ENCODE measurements at regions of chr10 and their contacts with region 1.

Region 1: DNA sequence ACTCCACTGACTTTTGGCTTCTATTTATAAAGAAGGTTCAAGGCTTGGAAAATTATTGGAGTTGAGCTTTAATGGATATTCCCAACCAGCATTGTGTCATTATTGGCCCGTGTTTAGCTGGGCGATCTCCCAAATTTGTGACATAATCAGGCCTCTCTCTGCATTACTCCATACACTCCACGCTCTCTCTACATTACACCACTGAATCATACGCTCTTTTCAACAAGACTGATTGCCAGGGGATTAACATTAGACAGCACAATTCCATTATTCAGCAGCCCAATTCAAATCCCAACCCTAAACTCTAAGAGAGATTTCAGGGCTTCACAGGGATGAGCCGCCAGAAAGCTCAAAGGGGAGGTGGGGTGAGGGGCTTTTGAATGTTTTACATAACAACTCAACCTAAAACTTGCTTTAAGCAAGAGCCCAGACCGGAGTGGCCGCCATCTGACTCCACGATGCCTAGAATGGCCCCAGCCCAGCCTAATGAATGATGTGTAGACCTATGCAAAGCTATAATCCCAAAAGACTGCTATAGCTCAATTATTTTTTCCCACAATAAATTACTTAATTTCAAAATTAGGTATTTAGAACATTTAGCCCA is 61.8 kb downstream of the FGFR2 start:
- DNase-seq: peak; percentile 43
- H3K4me3 Mint-ChIP-seq: no peak overlapping the region
- H3K27ac Mint-ChIP-seq: no peak overlapping the region
- H3K4me1 Mint-ChIP-seq: peaks cover 6% of the 10 kb centered on the region
- H3K27me3 Mint-ChIP-seq: no peaks in the 10 kb centered on the region
- CTCF ChIP-seq: no peak

Region 2: DNA sequence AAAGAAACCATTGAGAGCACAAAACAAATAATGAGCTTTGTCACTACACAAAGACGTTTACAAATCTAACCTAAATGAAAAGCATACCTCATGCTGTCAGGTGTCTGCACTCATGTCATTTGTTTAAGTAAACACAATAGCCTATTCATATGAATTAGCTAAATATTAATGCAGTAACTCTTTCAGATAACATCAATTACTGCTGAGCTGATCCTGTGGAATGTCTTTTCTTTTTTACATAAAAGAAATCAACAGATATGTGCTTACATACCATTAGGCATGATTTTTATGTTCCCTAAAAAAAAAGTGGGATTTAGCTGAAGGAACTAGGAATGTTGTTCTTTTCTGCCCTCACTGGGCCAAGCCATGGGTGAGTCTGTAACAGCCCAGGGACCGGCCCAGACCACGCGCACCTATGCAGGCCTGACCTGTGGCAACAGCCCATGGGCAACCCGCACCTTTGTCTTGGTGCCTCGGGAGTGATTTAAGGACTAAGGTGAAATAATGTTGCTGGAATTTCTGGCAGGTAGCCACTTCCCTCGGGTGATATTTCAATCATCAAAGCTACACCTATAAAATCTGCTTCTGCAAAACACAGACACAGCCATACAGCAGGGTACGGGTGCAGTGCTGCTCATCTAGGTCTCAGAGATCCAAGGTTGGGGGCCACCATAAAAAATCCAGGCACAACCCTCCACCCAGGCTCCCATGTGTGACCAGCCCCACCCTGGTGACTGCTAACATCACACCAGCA is 17.3 kb after region 1 on chr10:
- CTCF ChIA-PET with region 1: interaction called, 3 read pairs
- POLR2A ChIA-PET with region 1: interaction called, 12 read pairs
- intact Hi-C with region 1: no loop called
- DNase-seq: peak; percentile 48
- H3K4me3 Mint-ChIP-seq: no peak overlapping the region
- H3K27ac Mint-ChIP-seq: no peak overlapping the region
- H3K4me1 Mint-ChIP-seq: peaks cover 6% of the 10 kb centered on the region
- H3K27me3 Mint-ChIP-seq: no peaks in the 10 kb centered on the region
- CTCF ChIP-seq: no peak

Region 3: DNA sequence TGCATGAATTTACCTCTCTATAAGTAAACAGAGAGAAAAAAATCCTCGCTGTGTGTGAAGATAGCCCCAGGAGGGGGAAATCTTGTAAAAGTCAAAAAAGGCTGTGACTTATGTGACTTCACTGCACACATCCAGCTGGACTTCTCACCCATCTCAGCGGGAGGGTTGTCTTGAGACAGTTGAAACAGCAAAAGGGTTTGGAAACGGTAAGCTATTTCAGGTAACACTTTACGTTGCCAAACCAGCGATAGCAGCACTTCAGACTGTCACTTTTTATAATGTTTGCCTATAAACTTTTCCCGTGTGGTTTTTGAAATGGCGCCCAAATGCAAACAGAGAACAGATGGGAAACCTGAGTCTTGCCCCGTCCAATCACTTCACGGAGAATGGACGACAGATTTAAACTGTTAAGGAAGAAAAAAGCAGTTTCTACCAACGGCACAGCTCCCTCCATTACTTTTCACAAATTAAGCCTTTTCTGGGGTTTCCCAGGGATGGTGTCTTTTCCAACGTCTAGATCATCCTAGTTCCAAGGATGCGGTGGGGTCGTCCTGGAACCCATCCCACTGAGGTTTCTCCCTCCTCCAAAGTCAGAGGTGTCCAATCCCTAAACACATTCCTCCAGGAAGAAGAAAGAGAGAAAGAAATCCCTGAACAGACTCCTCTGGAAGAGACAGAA is 36.6 kb after region 1 on chr10:
- CTCF ChIA-PET with region 1: no interaction called
- POLR2A ChIA-PET with region 1: no interaction called
- intact Hi-C with region 1: no loop called
- DNase-seq: no peak
- H3K4me3 Mint-ChIP-seq: no peak overlapping the region
- H3K27ac Mint-ChIP-seq: no peak overlapping the region
- H3K4me1 Mint-ChIP-seq: no peaks in the 10 kb centered on the region
- H3K27me3 Mint-ChIP-seq: no peaks in the 10 kb centered on the region
- CTCF ChIP-seq: no peak

Measured in MCF 10A (cell line).